IMR-90 (cell line): ENCODE measurements at regions of chr9 and their contacts with region 1.

Region 1: DNA sequence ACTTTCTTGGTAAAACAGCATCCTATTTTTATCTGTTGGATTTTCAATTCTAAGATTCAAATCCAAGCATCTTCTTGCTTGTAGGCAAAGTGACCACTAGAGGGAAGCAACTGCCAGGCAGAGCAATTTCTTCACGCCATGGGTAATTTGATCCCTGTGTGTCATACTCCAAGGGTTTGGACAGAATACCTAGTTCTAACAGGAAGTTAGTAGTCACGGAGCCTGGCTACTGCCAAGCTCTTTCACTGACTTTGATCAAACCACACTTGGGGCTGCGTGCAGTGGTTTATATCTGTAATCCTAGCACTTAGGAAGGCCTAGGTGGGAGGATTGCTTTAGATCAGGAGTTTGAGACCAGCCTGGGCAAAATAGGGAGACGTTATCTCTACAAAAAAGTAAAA is 473.6 kb upstream of the TNC start:
- DNase-seq: peak; percentile 100
- ATAC-seq: peak; percentile 61
- H3K4me3 ChIP-seq: no peak overlapping the region
- H3K27ac ChIP-seq: peak overlapping the region; percentile 87
- H3K4me1 ChIP-seq: peaks cover 24% of the 10 kb centered on the region
- H3K27me3 ChIP-seq: no peaks in the 10 kb centered on the region
- CTCF ChIP-seq: peak; percentile 96
- POLR2A ChIP-seq: peak; percentile 65
- RAD21 ChIP-seq: peak; percentile 100

Region 2: DNA sequence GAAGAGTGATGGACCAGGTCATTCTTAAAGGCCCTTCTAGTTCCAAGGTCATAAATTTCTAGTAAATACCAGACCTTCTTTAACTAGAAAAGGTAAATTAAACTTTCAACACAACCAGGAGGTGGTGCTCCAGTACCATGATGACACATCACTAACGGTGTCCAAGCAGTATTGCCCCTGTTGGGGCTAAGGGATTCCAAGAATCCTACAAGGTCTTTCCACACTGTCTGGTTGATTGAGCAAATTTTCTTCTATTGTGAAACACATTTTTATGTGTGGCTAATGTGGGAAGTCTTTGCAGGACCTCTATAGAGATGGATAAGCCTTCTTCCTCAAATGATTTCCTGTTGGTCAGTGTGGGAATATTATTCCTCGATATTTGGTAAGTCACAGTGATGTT is 102.4 kb after region 1 on chr9:
- CTCF ChIA-PET with region 1: interaction called, 16 read pairs
- POLR2A ChIA-PET with region 1: no interaction called
- dilution Hi-C with region 1: no loop called
- in situ Hi-C with region 1: no loop called
- intact Hi-C with region 1: loop called (anchors 1 kb)
- DNase-seq: peak; percentile 93
- ATAC-seq: peak; percentile 69
- H3K4me3 ChIP-seq: no peak overlapping the region
- H3K27ac ChIP-seq: no peak overlapping the region
- H3K4me1 ChIP-seq: peaks cover 13% of the 10 kb centered on the region
- H3K27me3 ChIP-seq: no peaks in the 10 kb centered on the region
- CTCF ChIP-seq: peak; percentile 79
- POLR2A ChIP-seq: no peak
- RAD21 ChIP-seq: peak; percentile 86

Region 3: GRCh38 chr9:115883457-115884329 is 292.1 kb after region 1 on chr9:
- CTCF ChIA-PET with region 1: interaction called, 5 read pairs
- POLR2A ChIA-PET with region 1: interaction called, 3 read pairs
- dilution Hi-C with region 1: no loop called
- in situ Hi-C with region 1: loop called (anchors 10 kb)
- intact Hi-C with region 1: loop called (anchors 10 kb)
- DNase-seq: peak; percentile 60
- ATAC-seq: peak; percentile 75
- H3K4me3 ChIP-seq: no peak overlapping the region
- H3K27ac ChIP-seq: peak overlapping the region; percentile 1; the same call in 1 of the 2 replicates
- H3K4me1 ChIP-seq: peaks cover 11% of the 10 kb centered on the region
- H3K27me3 ChIP-seq: no peaks in the 10 kb centered on the region
- CTCF ChIP-seq: peak; percentile 66
- POLR2A ChIP-seq: no peak
- RAD21 ChIP-seq: peak; percentile 83

Region 4: GRCh38 chr9:116087246-116087645 is 495.7 kb after region 1 on chr9:
- CTCF ChIA-PET with region 1: no interaction called
- POLR2A ChIA-PET with region 1: no interaction called
- dilution Hi-C with region 1: no loop called
- in situ Hi-C with region 1: no loop called
- intact Hi-C with region 1: loop called (anchors 10 kb)
- DNase-seq: peak; percentile 86
- ATAC-seq: peak; percentile 69
- H3K4me3 ChIP-seq: no peak overlapping the region
- H3K27ac ChIP-seq: peak overlapping the region; percentile 86; the same call in 1 of the 2 replicates
- H3K4me1 ChIP-seq: peaks cover 4% of the 10 kb centered on the region
- H3K27me3 ChIP-seq: no peaks in the 10 kb centered on the region
- CTCF ChIP-seq: no peak
- POLR2A ChIP-seq: no peak
- RAD21 ChIP-seq: no peak

Region 5: GRCh38 chr9:116342071-116342470 is 750.5 kb after region 1 on chr9:
- CTCF ChIA-PET with region 1: no interaction called
- POLR2A ChIA-PET with region 1: no interaction called
- dilution Hi-C with region 1: no loop called
- in situ Hi-C with region 1: no loop called
- intact Hi-C with region 1: loop called (anchors 5 kb)
- DNase-seq: no peak
- ATAC-seq: no peak
- H3K4me3 ChIP-seq: no peak overlapping the region
- H3K27ac ChIP-seq: no peak overlapping the region
- H3K4me1 ChIP-seq: peaks cover 4% of the 10 kb centered on the region
- H3K27me3 ChIP-seq: no peaks in the 10 kb centered on the region
- CTCF ChIP-seq: no peak
- POLR2A ChIP-seq: no peak
- RAD21 ChIP-seq: no peak

Region 6: GRCh38 chr9:116860509-116861120 is 1269.0 kb after region 1 on chr9:
- CTCF ChIA-PET with region 1: interaction called, 5 read pairs
- POLR2A ChIA-PET with region 1: no interaction called
- dilution Hi-C with region 1: no loop called
- in situ Hi-C with region 1: loop called (anchors 25 kb)
- intact Hi-C with region 1: loop called (anchors 5 kb)
- DNase-seq: peak; percentile 63
- ATAC-seq: peak; percentile 99
- H3K4me3 ChIP-seq: no peak overlapping the region
- H3K27ac ChIP-seq: no peak overlapping the region
- H3K4me1 ChIP-seq: no peaks in the 10 kb centered on the region
- H3K27me3 ChIP-seq: no peaks in the 10 kb centered on the region; the same call in 1 of the 2 replicates
- CTCF ChIP-seq: peak; percentile 70
- POLR2A ChIP-seq: no peak
- RAD21 ChIP-seq: peak; percentile 61